ENCODE measurements at regions of chr16 and their contacts with region 1.

Region 1: GRCh38 chr16:14672403-14672971 is 21.6 kb downstream of the PLA2G10 start:
- DNase-seq: peak; percentile 12

Region 2: GRCh38 chr16:14609716-14610115 is 62.8 kb before region 1 on chr16:
- intact Hi-C with region 1: loop called in 1 of 2 experiments (anchors 2 kb)
- DNase-seq: no peak

Measured in posterior vena cava (tissue), 2 donors.